ENCODE measurements at regions of chr5 and their contacts with region 1.

Region 1: DNA sequence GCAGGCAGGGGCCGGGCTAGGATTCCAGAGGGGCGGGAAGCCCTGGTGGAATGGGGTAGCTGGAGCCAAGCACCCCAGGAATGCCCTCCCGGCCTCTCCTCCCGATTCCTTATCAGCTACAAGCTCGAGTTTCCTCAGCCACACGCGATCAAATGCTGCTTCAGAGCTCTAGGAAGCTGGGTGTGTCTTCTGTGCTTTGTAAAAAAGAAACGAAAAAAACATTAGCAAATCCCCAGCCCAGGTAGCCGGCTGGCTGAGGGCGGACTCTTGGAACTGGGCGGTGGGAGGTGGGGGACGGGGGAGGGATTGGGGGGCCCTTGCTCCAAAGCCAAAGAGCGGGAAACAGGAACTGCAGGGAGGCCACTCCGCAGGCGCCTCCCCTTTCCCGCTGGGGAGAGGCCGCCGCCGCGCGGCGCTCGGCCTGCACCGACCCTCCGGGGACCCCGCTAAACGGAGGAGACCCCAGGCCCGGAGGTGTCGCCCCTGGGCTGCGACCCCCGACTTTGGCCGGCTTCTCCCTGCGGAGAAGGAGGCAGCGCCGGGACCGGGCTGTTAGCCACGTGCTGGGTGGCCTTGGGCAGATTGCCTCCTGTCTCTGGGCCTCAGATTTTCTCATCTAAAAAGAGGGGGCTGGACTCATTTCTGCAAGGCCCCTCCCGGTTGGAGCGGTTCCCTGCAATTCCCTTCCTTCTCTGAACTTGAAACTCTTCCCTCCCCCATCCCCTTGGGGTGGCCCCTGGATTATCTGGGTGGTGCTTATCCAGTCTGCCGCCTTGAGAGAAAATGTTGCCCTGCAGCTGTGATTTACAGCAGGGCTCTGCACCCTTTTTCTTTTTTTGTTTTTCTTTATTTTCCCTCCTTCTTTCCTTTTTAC is 40.9 kb upstream of the FABP6 start:
- DNase-seq: peak; percentile 54

Region 2: DNA sequence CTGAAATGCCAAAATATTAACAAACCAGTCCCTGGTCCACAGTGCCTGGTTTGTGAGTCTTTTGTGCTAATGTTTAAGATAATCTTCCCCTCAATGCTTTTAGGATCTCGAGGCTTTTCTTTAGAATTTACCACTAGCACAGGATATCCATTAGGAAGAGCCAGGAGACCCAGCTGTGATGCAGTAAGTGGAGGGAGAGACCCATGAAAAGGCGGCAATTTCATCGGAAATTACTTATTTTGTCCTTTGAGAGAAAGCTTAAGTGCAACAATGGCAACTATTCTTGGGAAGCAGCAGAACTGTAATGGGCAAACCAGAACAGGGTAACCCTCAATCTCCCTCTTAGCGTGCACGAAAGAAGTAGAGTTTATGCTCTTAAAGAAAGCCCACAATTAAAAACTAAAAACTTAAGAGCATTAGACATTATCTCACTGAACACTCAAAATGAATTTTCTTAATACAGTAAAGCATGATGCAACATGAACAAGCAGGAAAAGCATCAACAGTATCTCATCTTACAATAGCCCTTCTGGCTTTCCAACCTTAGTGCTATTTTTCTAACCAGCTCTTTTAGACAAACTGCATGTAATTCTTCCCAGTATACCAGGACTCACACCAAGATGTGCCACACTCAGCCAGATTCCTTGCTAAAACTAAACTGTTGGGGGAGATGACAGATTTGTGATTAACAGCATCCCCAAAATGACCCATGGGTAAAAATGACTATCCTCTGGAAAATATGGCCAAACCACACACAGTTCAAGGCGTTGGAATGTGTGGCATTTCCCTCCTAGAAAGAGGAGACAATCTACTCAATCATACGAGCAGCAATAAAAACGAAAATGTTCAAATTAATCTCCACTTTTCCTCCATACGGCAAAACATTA is 105.5 kb before region 1 on chr5:
- in situ Hi-C with region 1: loop called (anchors 5 kb)
- DNase-seq: no peak